ENCODE measurements at regions of chr6 and their contacts with region 1.

Region 1: DNA sequence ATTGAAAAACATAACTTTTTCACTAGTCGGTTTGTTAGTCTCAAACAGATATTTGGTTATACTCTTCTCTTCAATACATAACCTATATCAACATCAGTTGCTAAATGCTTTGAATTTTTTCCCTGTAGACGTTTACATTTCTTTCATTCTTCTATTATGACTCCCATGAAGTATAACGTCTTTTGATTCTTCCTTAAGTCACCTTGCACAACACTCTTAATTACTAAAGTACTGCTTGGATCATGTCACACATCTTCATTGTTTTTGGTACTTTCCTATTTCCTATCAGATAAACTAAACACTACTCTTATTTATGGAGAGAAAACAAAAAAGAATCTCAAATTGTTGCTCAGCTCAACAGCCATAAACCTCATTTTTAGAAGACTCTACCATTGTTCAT is 23.0 kb upstream of the BMP5 start:
- H3K4me3 ChIP-seq: no peak overlapping the region
- H3K27ac ChIP-seq: no peak overlapping the region
- H3K4me1 ChIP-seq: peaks cover 12% of the 10 kb centered on the region
- CTCF ChIP-seq: no peak

Region 2: GRCh38 chr6:55866108-55866507 is 32.2 kb before region 1 on chr6:
- CTCF ChIA-PET with region 1: interaction called, 10 read pairs
- POLR2A ChIA-PET with region 1: no interaction called
- H3K4me3 ChIP-seq: no peak overlapping the region
- H3K27ac ChIP-seq: no peak overlapping the region
- H3K4me1 ChIP-seq: peaks cover 20% of the 10 kb centered on the region
- CTCF ChIP-seq: no peak

Region 3: DNA sequence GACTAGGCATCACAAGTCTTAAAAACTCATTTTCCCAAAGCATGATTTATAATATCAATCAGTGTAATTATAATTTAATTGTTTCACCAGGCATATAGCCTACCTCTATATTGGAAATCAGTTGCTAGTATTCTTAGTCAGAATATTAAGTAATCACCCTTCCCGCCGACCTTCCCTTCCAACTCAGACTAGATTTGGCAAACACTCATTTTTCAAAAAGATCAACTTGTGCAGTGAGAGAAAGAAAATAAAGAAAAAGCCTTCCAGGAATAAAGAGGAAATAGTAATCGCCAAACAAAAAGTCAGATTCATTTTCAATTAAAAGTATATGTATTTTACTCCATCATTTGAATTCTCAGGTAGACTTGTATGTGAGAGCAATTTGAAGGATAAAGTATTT is 21.1 kb before region 1 on chr6:
- CTCF ChIA-PET with region 1: no interaction called
- POLR2A ChIA-PET with region 1: no interaction called
- H3K4me3 ChIP-seq: no peak overlapping the region
- H3K27ac ChIP-seq: no peak overlapping the region
- H3K4me1 ChIP-seq: peaks cover 5% of the 10 kb centered on the region; the same call in 1 of the 2 replicates
- CTCF ChIP-seq: no peak

Measured in HEK293 (cell line).